Heart right ventricle (tissue), 16 donors: ENCODE measurements at regions of chr3 and their contacts with region 1.

Region 1: GRCh38 chr3:50370594-50370993 is 11.3 kb upstream of the TMEM115 start:
- DNase-seq: no peak
- ATAC-seq: peak in 1 of 8 donors; percentile 13
- H3K4me3 ChIP-seq: no peak overlapping the region
- H3K27ac ChIP-seq: no peak overlapping the region
- H3K4me1 ChIP-seq: peaks cover 0 to 4% (median 0%) of the 10 kb centered on the region in 9 donors
- H3K27me3 ChIP-seq: peaks cover 0 to 3% (median 0%) of the 10 kb centered on the region in 7 donors
- CTCF ChIP-seq: peak in 2 of 9 donors; percentile 23 to 30

Region 2: GRCh38 chr3:50530001-50530970 is 159.7 kb after region 1 on chr3:
- intact Hi-C with region 1: loop called in 1 of 10 experiments (anchors 10 kb)
- DNase-seq: no peak
- ATAC-seq: no peak
- H3K4me3 ChIP-seq: no peak overlapping the region
- H3K27ac ChIP-seq: no peak overlapping the region
- H3K4me1 ChIP-seq: no peaks in the 10 kb centered on the region
- H3K27me3 ChIP-seq: peaks cover 0 to 24% (median 12%) of the 10 kb centered on the region in 7 donors
- CTCF ChIP-seq: no peak